ENCODE measurements at regions of chr7 and their contacts with region 1.

Region 1: DNA sequence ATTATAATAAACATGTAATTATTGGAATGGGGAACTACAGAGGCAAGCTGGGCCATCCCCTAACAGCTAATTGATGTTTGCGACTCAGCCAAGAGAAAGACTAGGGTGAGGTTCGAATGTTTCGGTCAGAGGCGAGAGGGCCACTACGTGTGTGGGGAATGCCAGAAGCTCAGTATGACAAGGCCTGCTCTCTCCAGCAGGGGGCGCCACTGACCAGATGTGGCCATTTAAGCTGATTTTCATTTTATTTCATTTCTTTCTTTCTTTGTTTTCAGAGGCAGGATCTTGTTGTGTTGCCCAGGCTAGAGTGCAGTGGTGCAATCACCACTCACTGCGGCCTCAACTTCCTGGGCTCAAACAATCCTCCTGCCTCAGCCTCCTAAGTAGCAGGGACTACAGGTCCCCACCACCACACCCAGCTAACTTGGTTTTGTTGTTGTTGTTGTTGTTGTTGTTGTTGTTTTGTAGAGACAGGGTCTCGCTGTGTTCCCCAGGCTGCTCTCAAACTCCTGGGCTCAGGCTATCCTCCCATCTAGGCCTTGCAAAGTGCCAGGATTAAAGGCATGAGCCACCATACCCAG is 38.1 kb downstream of the TMEM130 start:
- DNase-seq: peak; percentile 57
- H3K4me3 Mint-ChIP-seq: no peak overlapping the region
- H3K27ac Mint-ChIP-seq: no peak overlapping the region
- H3K4me1 Mint-ChIP-seq: no peaks in the 10 kb centered on the region
- H3K27me3 Mint-ChIP-seq: peaks cover 2% of the 10 kb centered on the region

Region 2: GRCh38 chr7:98872328-98872924 is 40.7 kb after region 1 on chr7:
- CTCF ChIA-PET with region 1: interaction called, 10 read pairs
- DNase-seq: peak; percentile 54
- H3K4me3 Mint-ChIP-seq: no peak overlapping the region
- H3K27ac Mint-ChIP-seq: no peak overlapping the region
- H3K4me1 Mint-ChIP-seq: peaks cover 7% of the 10 kb centered on the region
- H3K27me3 Mint-ChIP-seq: peaks cover 72% of the 10 kb centered on the region

Measured in activated naive CD4-positive, alpha-beta T cell treated with anti-CD3 and anti-CD28 coated beads, Interleukin-2, amount 10 ng/mL, durations not matched to agents 7 days and 5 days (primary cell).